ENCODE measurements at regions of chr2 and their contacts with region 1.

Region 1: DNA sequence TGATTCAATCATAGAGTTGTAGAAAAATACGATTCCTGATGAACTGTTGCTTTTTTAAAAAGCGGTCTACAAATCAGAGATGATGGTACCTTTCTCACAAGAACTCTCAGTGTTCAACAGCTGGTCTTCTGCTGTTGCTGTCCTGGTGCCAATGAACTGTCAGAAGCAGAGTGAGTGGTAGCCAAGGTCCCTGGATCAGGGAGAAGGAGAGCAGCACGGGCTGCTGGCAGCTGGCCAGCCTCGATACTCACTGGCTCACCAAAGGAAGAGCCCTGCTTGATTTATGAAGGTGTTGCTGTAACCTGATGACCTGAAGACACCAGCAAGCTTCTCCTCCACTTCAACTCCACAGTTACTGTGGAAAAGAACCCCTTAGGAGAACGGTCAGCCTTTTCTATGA is 300.8 kb upstream of the SOX11 start:
- DNase-seq: peak; percentile 76
- ATAC-seq: peak; percentile 60

Region 2: GRCh38 chr2:5520463-5520972 is 129.2 kb after region 1 on chr2:
- intact Hi-C with region 1: no loop called
- DNase-seq: no peak
- ATAC-seq: peak; percentile 94

Region 3: DNA sequence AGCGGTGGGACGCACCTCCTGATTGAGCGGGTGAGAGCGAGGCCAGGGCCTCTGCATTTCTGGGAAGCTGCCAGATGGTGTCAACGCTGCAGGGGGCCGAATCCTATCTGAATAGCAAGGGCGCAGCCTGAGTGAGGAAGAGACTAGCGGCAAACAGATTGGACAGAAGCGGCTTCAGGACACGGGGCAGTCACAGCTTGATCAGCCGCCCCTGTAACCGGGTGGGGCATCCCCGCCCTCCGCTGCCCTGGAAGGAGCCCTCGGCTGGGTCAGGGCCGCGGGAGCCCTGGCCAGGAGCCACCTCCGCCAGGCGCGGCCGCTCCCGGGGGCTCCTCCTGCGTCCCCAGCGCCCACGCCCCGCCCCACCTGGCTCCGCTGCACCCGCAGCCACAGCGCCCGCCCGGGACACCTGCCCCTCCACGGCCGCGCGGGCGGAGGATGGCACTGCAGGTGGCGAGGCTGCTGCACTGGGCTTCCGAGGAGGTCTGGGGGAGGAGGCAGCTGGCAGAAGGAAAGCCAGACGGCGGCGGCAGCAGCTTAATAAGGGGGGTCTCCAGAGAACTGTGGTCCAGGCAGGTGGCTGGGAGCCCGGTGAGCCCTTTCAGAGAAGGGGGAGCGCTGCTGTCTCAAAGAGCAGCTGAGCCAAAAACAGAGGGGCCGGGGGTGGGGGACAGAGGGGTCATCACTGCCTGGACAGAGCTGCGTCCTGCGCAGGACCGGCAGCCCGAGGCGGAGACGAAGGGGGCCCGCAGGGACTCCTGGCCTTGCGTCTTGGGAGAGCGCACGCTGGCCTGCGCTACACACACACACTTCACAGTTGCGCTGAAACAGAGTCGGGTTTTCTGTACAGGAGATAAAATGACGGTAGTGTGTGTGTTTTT is 282.0 kb after region 1 on chr2:
- intact Hi-C with region 1: loop called (anchors 10 kb)
- DNase-seq: no peak
- ATAC-seq: no peak

Region 4: DNA sequence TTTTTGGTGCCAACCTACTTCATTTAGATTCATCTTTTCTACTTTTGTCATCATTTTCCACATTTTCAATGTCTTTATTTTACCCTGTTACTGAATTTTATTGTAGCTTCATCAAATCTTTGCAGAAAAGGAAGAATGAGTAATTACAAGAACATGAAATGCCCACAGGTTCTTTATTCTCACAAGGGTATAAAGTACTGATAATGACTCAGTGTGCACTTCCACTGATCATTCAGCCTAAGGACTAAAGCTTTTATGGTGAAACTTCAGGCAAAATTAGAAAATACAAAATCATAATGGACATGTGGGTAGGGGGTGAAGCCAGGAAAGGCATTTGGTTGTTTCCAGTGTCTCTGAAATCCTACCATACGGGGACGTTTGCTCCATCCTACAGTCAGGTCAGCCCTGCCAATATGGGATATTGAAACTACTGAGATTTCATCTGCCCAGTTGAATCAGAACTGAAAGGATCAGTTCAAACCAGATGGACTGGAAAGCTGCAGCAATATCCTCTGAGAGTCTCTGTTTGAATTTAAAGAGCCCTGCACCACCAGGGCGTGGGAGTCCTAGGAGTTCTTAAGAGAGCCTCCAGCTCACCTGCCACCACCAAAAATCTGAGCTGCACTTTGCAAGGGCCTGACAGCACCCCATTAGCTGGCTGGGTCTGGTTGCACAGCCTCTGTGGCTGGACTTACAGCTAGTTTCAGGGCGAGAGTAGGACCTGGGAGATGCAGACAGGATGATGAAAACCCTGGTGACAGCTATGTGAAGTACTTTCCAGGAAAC is 1084.0 kb after region 1 on chr2:
- intact Hi-C with region 1: no loop called
- DNase-seq: no peak
- ATAC-seq: no peak

Measured in Right ventricle myocardium inferior (tissue), 1 donor.